Breast epithelium (tissue), 4 donors: ENCODE measurements at regions of chr2 and their contacts with region 1.

Region 1: GRCh38 chr2:17355608-17356329 is 162.5 kb downstream of the RAD51AP2 start:
- DNase-seq: no peak
- H3K4me3 ChIP-seq: no peak overlapping the region
- H3K27ac ChIP-seq: no peak overlapping the region
- H3K4me1 ChIP-seq: no peaks in the 10 kb centered on the region
- H3K27me3 ChIP-seq: no peaks in the 10 kb centered on the region
- CTCF ChIP-seq: no peak
- POLR2A ChIP-seq: no peak

Region 2: DNA sequence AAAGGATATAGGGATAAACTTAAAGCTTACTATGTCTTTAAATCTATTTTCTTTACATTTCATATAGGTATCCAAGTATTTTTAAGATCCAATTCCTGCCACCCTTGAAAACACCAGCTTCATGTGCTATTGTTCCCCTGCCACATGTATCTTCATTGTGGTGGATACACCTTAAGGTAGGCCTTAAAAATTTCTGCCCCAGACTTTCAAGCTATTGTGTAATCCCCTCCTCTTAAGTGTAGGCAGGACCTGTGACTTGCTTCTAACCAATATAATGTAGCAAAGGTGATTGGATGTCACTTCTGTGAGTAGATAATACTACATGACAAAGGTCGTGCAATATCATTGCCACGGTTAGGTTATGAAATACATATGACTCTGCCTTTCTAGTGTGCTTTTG is 43.0 kb after region 1 on chr2:
- intact Hi-C with region 1: no loop called
- DNase-seq: no peak
- H3K4me3 ChIP-seq: no peak overlapping the region
- H3K27ac ChIP-seq: no peak overlapping the region
- H3K4me1 ChIP-seq: no peaks in the 10 kb centered on the region
- H3K27me3 ChIP-seq: no peaks in the 10 kb centered on the region
- CTCF ChIP-seq: no peak
- POLR2A ChIP-seq: no peak

Region 3: GRCh38 chr2:18209919-18210639 is 854.3 kb after region 1 on chr2:
- intact Hi-C with region 1: loop called (anchors 10 kb)
- DNase-seq: no peak
- H3K4me3 ChIP-seq: no peak overlapping the region
- H3K27ac ChIP-seq: no peak overlapping the region
- H3K4me1 ChIP-seq: no peaks in the 10 kb centered on the region
- H3K27me3 ChIP-seq: no peaks in the 10 kb centered on the region
- CTCF ChIP-seq: no peak
- POLR2A ChIP-seq: no peak